CD8-positive, alpha-beta T cell (primary cell): ENCODE measurements at regions of chr3 and their contacts with region 1.

Region 1: GRCh38 chr3:115783938-115784738 is 160.8 kb downstream of the GAP43 start:
- DNase-seq: peak; percentile 85 to 96 (median 92)
- ATAC-seq: peak; percentile 79
- H3K4me3 ChIP-seq: peak overlapping the region; percentile 67 to 72
- H3K4me3 Mint-ChIP-seq: peak overlapping the region; percentile 79
- H3K27ac ChIP-seq: peak overlapping the region; percentile 95
- H3K27ac Mint-ChIP-seq: peak overlapping the region; percentile 97
- H3K4me1 ChIP-seq: peaks cover 8% of the 10 kb centered on the region
- H3K4me1 Mint-ChIP-seq: peaks cover 15% of the 10 kb centered on the region
- H3K27me3 ChIP-seq: peaks cover 0 to 2% of the 10 kb centered on the region in 2 experiments
- H3K27me3 Mint-ChIP-seq: no peaks in the 10 kb centered on the region
- CTCF ChIP-seq: peak; percentile 98

Region 2: GRCh38 chr3:114056130-114057010 is 1727.8 kb before region 1 on chr3 and contains the starts of genes CCDC191 and QTRT2:
- CTCF ChIA-PET with region 1: no interaction called
- POLR2A ChIA-PET with region 1: no interaction called
- intact Hi-C with region 1: loop called in 1 of 2 experiments (anchors 10 kb)
- DNase-seq: peak; percentile 94 to 100 (median 98)
- ATAC-seq: peak; percentile 95
- H3K4me3 ChIP-seq: peak within 1 kb of the TSS; percentile 70 to 96
- H3K4me3 Mint-ChIP-seq: peak within 1 kb of the TSS; percentile 94
- H3K27ac ChIP-seq: peak within 1 kb of the TSS; percentile 84 to 97
- H3K27ac Mint-ChIP-seq: peak within 1 kb of the TSS; percentile 98
- H3K4me1 ChIP-seq: peaks cover 20% of the 10 kb centered on the region
- H3K4me1 Mint-ChIP-seq: peaks cover 53% of the 10 kb centered on the region
- H3K27me3 ChIP-seq: no peaks in the 10 kb centered on the region
- H3K27me3 Mint-ChIP-seq: no peaks in the 10 kb centered on the region
- CTCF ChIP-seq: no peak
- total RNA-seq, gene CCDC191: 2.8 to 2.9 TPM
- total RNA-seq, gene QTRT2: 31.7 to 36.6 TPM

Region 3: GRCh38 chr3:115092220-115092791 is 691.8 kb before region 1 on chr3:
- CTCF ChIA-PET with region 1: interaction called, 6 read pairs
- POLR2A ChIA-PET with region 1: no interaction called
- intact Hi-C with region 1: loop called (anchors 2 kb)
- DNase-seq: peak; percentile 32 to 77 (median 65)
- ATAC-seq: peak; percentile 72
- H3K4me3 ChIP-seq: no peak overlapping the region
- H3K4me3 Mint-ChIP-seq: no peak overlapping the region
- H3K27ac ChIP-seq: no peak overlapping the region
- H3K27ac Mint-ChIP-seq: peak overlapping the region; percentile 8
- H3K4me1 ChIP-seq: no peaks in the 10 kb centered on the region
- H3K4me1 Mint-ChIP-seq: peaks cover 50% of the 10 kb centered on the region
- H3K27me3 ChIP-seq: no peaks in the 10 kb centered on the region
- H3K27me3 Mint-ChIP-seq: no peaks in the 10 kb centered on the region
- CTCF ChIP-seq: peak; percentile 89

Region 4: GRCh38 chr3:115217678-115218451 is 566.3 kb before region 1 on chr3:
- CTCF ChIA-PET with region 1: interaction called, 7 read pairs
- POLR2A ChIA-PET with region 1: no interaction called
- intact Hi-C with region 1: loop called in 1 of 2 experiments (anchors 1 kb)
- DNase-seq: peak in 3 of 9 experiments; percentile 14 to 51 (median 43)
- ATAC-seq: no peak
- H3K4me3 ChIP-seq: no peak overlapping the region
- H3K4me3 Mint-ChIP-seq: no peak overlapping the region
- H3K27ac ChIP-seq: no peak overlapping the region
- H3K27ac Mint-ChIP-seq: no peak overlapping the region
- H3K4me1 ChIP-seq: no peaks in the 10 kb centered on the region
- H3K4me1 Mint-ChIP-seq: no peaks in the 10 kb centered on the region
- H3K27me3 ChIP-seq: no peaks in the 10 kb centered on the region
- H3K27me3 Mint-ChIP-seq: peaks cover 2% of the 10 kb centered on the region
- CTCF ChIP-seq: peak; percentile 38

Region 5: GRCh38 chr3:115523458-115523857 is 260.7 kb before region 1 on chr3:
- CTCF ChIA-PET with region 1: no interaction called
- POLR2A ChIA-PET with region 1: no interaction called
- intact Hi-C with region 1: no loop called
- DNase-seq: no peak
- ATAC-seq: no peak
- H3K4me3 ChIP-seq: no peak overlapping the region
- H3K4me3 Mint-ChIP-seq: no peak overlapping the region
- H3K27ac ChIP-seq: no peak overlapping the region
- H3K27ac Mint-ChIP-seq: no peak overlapping the region
- H3K4me1 ChIP-seq: no peaks in the 10 kb centered on the region
- H3K4me1 Mint-ChIP-seq: no peaks in the 10 kb centered on the region
- H3K27me3 ChIP-seq: no peaks in the 10 kb centered on the region
- H3K27me3 Mint-ChIP-seq: peaks cover 17% of the 10 kb centered on the region
- CTCF ChIP-seq: no peak

Region 6: DNA sequence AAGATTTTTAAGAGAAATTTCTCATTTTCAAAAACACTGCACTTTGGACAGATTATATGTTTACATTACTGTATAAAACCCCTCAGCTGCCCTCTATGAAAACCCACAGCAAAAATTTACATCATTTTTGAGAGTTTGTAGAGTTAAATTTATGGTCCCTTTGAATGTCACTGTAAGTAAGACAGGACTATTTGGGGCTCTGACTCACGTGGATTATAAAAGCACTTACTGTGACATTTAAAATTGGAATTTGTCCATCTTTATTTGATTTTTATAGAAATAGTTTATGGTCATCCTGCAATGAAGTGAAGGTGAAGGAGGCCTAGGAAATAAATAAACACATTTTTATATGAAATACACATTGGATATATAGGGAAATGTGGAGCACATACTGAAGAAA is 11.2 kb before region 1 on chr3:
- CTCF ChIA-PET with region 1: interaction called, 11 read pairs
- POLR2A ChIA-PET with region 1: interaction called, 6 read pairs
- intact Hi-C with region 1: no loop called
- DNase-seq: no peak
- ATAC-seq: no peak
- H3K4me3 ChIP-seq: no peak overlapping the region
- H3K4me3 Mint-ChIP-seq: no peak overlapping the region
- H3K27ac ChIP-seq: no peak overlapping the region
- H3K27ac Mint-ChIP-seq: no peak overlapping the region
- H3K4me1 ChIP-seq: no peaks in the 10 kb centered on the region
- H3K4me1 Mint-ChIP-seq: no peaks in the 10 kb centered on the region
- H3K27me3 ChIP-seq: no peaks in the 10 kb centered on the region
- H3K27me3 Mint-ChIP-seq: peaks cover 14% of the 10 kb centered on the region
- CTCF ChIP-seq: no peak

Region 7: GRCh38 chr3:116005404-116005803 is 221.3 kb after region 1 on chr3:
- CTCF ChIA-PET with region 1: no interaction called
- POLR2A ChIA-PET with region 1: no interaction called
- intact Hi-C with region 1: no loop called
- DNase-seq: no peak
- ATAC-seq: no peak
- H3K4me3 ChIP-seq: no peak overlapping the region
- H3K4me3 Mint-ChIP-seq: no peak overlapping the region
- H3K27ac ChIP-seq: no peak overlapping the region
- H3K27ac Mint-ChIP-seq: no peak overlapping the region
- H3K4me1 ChIP-seq: no peaks in the 10 kb centered on the region
- H3K4me1 Mint-ChIP-seq: no peaks in the 10 kb centered on the region
- H3K27me3 ChIP-seq: no peaks in the 10 kb centered on the region
- H3K27me3 Mint-ChIP-seq: no peaks in the 10 kb centered on the region
- CTCF ChIP-seq: no peak